BJ (cell line): ENCODE measurements at regions of chr9 and their contacts with region 1.

Region 1: GRCh38 chr9:70111042-70111602 is 67.5 kb downstream of the MAMDC2 start:
- DNase-seq: no peak
- H3K4me3 ChIP-seq: no peak overlapping the region
- H3K27me3 ChIP-seq: no peaks in the 10 kb centered on the region
- CTCF ChIP-seq: peak; percentile 91

Region 2: DNA sequence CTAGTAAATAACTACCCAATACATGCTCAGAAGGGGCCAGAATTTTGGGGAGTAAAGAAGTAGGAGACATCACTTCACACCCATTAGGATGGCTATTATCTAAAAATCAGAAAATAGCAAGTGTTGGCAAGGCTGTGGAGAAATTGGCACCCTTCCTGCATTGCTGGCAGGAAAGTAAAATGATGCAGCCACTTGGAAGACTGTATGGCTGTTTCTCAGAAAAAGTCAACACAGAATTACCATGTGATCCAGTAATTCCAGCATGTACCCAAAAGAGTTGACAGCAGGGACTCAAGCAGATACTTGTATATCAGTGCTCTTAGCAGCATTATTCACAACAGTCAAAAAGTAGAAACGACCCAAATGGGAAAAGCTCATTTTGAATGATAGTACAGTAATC is 546.6 kb before region 1 on chr9:
- CTCF ChIA-PET with region 1: no interaction called
- POLR2A ChIA-PET with region 1: no interaction called
- DNase-seq: no peak
- H3K4me3 ChIP-seq: no peak overlapping the region
- H3K27me3 ChIP-seq: no peaks in the 10 kb centered on the region
- CTCF ChIP-seq: no peak

Region 3: GRCh38 chr9:69951411-69951810 is 159.7 kb before region 1 on chr9:
- CTCF ChIA-PET with region 1: interaction called, 10 read pairs
- POLR2A ChIA-PET with region 1: no interaction called
- DNase-seq: no peak
- H3K4me3 ChIP-seq: no peak overlapping the region
- H3K27me3 ChIP-seq: no peaks in the 10 kb centered on the region
- CTCF ChIP-seq: no peak

Region 4: GRCh38 chr9:70003901-70004714 is 107.0 kb before region 1 on chr9:
- CTCF ChIA-PET with region 1: interaction called, 12 read pairs
- POLR2A ChIA-PET with region 1: no interaction called
- DNase-seq: no peak
- H3K4me3 ChIP-seq: no peak overlapping the region
- H3K27me3 ChIP-seq: no peaks in the 10 kb centered on the region
- CTCF ChIP-seq: no peak

Region 5: DNA sequence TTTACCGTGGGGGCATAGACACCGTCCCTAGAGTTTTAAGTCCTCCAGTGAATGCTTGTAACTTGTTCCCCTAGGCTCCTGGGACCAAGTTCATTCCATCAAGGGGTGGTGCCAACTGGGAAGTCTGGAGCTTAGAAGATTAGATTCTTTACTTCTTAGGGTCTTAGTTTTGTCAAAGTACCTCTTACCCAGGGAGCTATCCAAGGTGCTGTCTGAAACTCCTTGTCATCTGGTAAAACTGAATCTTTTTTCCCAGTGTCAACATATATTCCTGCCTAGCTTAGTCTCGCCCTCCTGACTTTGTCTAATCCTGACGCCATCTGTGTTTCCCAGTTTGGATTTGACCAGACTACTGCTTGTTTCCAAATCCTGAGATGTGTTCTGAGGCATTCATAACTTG is 25.9 kb before region 1 on chr9:
- CTCF ChIA-PET with region 1: interaction called, 21 read pairs
- POLR2A ChIA-PET with region 1: no interaction called
- DNase-seq: no peak
- H3K4me3 ChIP-seq: no peak overlapping the region
- H3K27me3 ChIP-seq: no peaks in the 10 kb centered on the region
- CTCF ChIP-seq: no peak

Region 6: DNA sequence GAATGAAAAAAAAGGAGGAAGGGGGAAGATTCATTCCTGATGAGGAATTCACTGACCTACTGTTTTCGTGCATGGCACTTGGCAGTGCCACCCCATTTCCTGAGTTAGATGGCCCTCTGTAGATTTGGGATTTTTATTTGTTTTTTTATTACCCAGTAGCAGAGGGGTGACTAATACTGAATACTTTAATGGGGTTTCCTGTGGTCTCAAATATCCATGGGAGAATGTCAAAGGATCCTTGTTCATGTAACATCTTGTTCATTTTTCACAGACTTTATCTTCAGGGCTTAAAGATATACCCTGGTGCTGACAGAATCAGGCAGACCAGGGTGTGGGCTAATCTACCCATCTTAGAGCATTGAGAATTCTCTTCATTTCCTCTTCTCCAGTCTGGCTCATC is 25.5 kb after region 1 on chr9:
- CTCF ChIA-PET with region 1: interaction called, 25 read pairs
- POLR2A ChIA-PET with region 1: no interaction called
- DNase-seq: peak; percentile 49
- H3K4me3 ChIP-seq: no peak overlapping the region
- H3K27me3 ChIP-seq: no peaks in the 10 kb centered on the region
- CTCF ChIP-seq: no peak

Region 7: DNA sequence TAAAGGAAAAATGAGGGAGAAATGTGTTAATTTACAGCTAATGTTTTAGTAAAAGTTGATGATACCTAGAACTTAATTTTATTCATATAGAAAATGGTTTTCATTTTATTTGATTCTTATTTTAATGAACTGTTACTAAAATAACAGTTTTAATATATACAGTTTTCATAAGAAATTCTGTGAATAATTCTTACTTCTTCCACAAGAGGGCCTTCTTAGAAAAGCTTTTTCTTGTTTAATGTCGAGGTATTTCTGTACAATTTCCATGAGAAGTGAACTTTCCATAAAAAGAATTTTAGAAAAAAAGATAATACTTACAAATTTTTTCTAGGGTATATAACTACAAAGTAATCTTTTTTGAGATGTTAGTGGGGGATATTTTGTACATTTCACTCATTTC is 229.4 kb after region 1 on chr9:
- CTCF ChIA-PET with region 1: no interaction called
- POLR2A ChIA-PET with region 1: no interaction called
- DNase-seq: peak; percentile 8
- H3K4me3 ChIP-seq: no peak overlapping the region
- H3K27me3 ChIP-seq: no peaks in the 10 kb centered on the region
- CTCF ChIP-seq: peak; percentile 41; the same call in 1 of the 2 replicates